Mammary epithelial cell (primary cell): ENCODE measurements at regions of chr12 and their contacts with region 1.

Region 1: DNA sequence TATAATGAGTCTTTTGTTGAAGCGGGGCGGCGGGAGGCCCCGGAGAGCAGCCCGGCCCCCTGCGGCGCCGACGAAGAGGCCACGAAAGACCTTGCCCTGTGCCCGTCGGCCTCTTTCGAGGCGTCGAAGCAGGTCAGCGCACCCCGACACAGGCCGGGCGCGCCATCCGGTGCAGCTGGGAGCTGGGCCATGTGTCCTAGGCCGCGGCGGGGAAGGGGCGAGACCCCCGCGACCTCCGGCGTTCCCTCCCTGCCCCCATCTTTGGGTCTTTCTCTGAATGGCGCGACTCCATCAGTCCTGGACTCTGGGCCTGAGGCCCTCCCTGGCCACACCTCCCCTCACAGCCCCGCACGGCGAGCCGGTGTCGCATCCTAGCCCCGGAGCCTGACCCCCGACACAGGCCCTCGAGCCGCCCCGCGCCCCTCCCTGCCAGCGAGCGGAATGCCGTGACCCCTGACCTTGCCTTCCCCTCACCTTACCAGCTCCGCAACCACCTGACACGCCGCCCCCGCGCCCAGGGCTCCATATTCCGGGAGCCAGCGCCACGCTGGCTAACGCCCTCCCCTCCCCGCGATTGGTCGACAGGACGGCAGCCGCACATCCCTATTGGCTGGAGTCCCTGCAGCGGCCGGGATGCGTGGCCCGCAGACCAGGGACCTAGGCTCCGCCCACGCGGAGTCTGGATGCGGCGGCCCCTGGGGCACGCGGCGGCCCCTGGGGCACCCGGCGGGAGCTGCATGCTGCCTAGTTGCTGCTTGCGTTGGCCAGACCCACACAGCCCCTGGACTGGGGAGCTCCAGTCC is at the start of gene SLC11A2:
- DNase-seq: peak; percentile 95
- H3K4me3 ChIP-seq: peak within 1 kb of the TSS; percentile 73 to 87 (median 82)
- H3K27ac ChIP-seq: peak within 1 kb of the TSS; percentile 98
- H3K4me1 ChIP-seq: peaks cover 39% of the 10 kb centered on the region
- H3K27me3 ChIP-seq: no peaks in the 10 kb centered on the region
- CTCF ChIP-seq: no peak
- total RNA-seq, gene SLC11A2: 42.5 to 56.3 TPM

Region 2: GRCh38 chr12:50924439-50925341 is 101.3 kb before region 1 on chr12:
- CTCF ChIA-PET with region 1: no interaction called
- dilution Hi-C with region 1: no loop called
- in situ Hi-C with region 1: no loop called
- intact Hi-C with region 1: loop called (anchors 5 kb)
- DNase-seq: peak; percentile 80
- H3K4me3 ChIP-seq: peak overlapping the region; percentile 39 to 63 (median 61)
- H3K27ac ChIP-seq: no peak overlapping the region
- H3K4me1 ChIP-seq: peaks cover 32% of the 10 kb centered on the region
- H3K27me3 ChIP-seq: no peaks in the 10 kb centered on the region
- CTCF ChIP-seq: no peak

Region 3: GRCh38 chr12:50986966-50987737 is 38.9 kb before region 1 on chr12:
- CTCF ChIA-PET with region 1: interaction called, 4 read pairs
- dilution Hi-C with region 1: no loop called
- in situ Hi-C with region 1: no loop called
- intact Hi-C with region 1: loop called (anchors 5 kb)
- DNase-seq: peak; percentile 32
- H3K4me3 ChIP-seq: no peak overlapping the region
- H3K27ac ChIP-seq: no peak overlapping the region
- H3K4me1 ChIP-seq: peaks cover 7% of the 10 kb centered on the region
- H3K27me3 ChIP-seq: no peaks in the 10 kb centered on the region
- CTCF ChIP-seq: peak; percentile 31 to 79

Region 4: DNA sequence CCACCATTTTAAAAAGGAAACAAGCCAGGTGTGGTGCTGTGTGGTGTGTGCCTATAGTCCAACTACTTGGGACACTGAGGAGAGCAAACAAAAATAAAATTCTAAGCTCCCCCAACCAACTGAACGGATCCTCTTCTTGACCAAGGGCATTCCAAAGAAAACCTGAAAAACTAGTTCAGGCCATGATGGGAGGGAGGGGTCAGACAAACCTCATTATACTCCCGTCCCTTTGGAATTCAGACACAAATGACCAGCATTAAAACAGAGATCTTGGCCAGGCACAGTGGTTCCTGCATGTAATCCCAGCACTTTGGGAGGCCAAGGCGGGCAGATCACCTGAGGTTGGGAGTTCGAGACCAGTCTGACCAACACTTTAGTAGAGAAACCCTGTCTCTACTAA is 20.3 kb before region 1 on chr12:
- CTCF ChIA-PET with region 1: no interaction called
- dilution Hi-C with region 1: no loop called
- in situ Hi-C with region 1: no loop called
- intact Hi-C with region 1: loop called (anchors 2 kb)
- DNase-seq: peak; percentile 31
- H3K4me3 ChIP-seq: no peak overlapping the region
- H3K27ac ChIP-seq: no peak overlapping the region
- H3K4me1 ChIP-seq: peaks cover 6% of the 10 kb centered on the region
- H3K27me3 ChIP-seq: no peaks in the 10 kb centered on the region
- CTCF ChIP-seq: no peak